K562 (cell line): ENCODE measurements at regions of chr2 and their contacts with region 1.

Region 1: DNA sequence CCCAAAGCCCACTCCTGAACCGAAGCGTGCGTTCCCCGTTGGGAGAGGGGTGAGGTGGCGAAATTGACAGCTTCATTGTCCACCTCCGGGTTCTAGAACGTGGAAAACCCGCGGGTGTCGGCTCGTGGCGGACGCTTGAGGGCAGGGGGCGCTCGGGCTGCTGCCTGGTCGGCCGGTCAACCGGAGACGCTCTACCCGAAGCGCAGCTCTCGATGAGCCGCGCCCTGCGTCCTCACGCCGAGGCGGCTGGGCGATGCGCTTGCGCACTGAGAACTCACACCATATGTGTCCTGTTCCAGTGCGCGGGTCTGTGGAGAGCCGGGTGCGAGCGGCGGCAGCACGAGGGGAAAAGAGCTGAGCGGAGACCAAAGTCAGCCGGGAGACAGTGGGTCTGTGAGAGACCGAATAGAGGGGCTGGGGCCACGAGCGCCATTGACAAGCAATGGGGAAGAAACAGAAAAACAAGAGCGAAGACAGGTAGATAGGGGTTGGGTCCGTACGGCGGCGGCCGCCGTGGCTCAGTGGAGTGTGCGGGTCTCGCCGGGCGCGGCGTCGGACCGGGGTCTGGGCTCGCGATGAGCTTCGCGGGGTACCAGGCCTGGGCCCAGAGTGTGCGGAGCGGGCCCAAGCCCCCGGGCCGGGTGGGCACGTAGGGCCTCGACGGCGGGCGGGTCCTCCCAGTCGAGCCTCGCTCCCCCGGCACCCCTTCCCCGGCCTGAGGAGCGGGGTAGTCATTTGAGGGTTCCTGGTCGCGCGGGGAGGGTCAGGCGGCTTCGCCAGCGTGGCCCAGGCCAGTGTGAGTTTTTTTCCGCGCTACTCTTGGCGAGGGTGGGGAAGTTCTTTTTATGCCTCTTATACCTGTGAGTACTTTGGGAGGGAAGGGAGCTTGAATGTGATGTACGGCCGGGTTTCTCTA is at the start of gene EIF5B:
- DNase-seq: peak; percentile 86 to 99 (median 90)
- ATAC-seq: peak; percentile 89
- H3K4me3 ChIP-seq: peak within 1 kb of the TSS; percentile 61
- H3K27ac ChIP-seq: peak within 1 kb of the TSS; percentile 92
- H3K4me1 ChIP-seq: peaks cover 11 to 19% of the 10 kb centered on the region in 2 experiments; a peak in 4 of 5 replicates
- H3K27me3 ChIP-seq: no peaks in the 10 kb centered on the region
- CTCF ChIP-seq: peak; percentile 77 to 83 (median 80)
- EP300 ChIP-seq: peak; percentile 52; the same call in 1 of the 2 replicates
- POLR2A ChIP-seq: peak; percentile 96
- RAD21 ChIP-seq: peak; percentile 11 to 14; a peak in 1 of 4 replicates
- polyA plus RNA-seq, gene EIF5B: 26.5 to 33.2 TPM

Region 2: GRCh38 chr2:98036349-98037000 is 1300.9 kb before region 1 on chr2:
- CTCF ChIA-PET with region 1: no interaction called
- POLR2A ChIA-PET with region 1: no interaction called
- in situ Hi-C with region 1: no loop called
- intact Hi-C with region 1: no loop called
- DNase-seq: no peak
- ATAC-seq: no peak; the same call in 2 of the 3 replicates
- H3K4me3 ChIP-seq: no peak overlapping the region
- H3K27ac ChIP-seq: no peak overlapping the region
- H3K4me1 ChIP-seq: peaks cover 0 to 7% of the 10 kb centered on the region in 2 experiments; a peak in 3 of 5 replicates
- H3K27me3 ChIP-seq: peaks cover 0 to 14% of the 10 kb centered on the region in 2 experiments; a peak in 2 of 5 replicates
- CTCF ChIP-seq: no peak
- EP300 ChIP-seq: no peak
- POLR2A ChIP-seq: no peak
- RAD21 ChIP-seq: no peak

Region 3: GRCh38 chr2:99171377-99172140 is 165.8 kb before region 1 on chr2:
- CTCF ChIA-PET with region 1: no interaction called
- POLR2A ChIA-PET with region 1: no interaction called
- in situ Hi-C with region 1: no loop called
- intact Hi-C with region 1: no loop called
- DNase-seq: no peak
- ATAC-seq: no peak
- H3K4me3 ChIP-seq: no peak overlapping the region
- H3K27ac ChIP-seq: no peak overlapping the region
- H3K4me1 ChIP-seq: no peaks in the 10 kb centered on the region
- H3K27me3 ChIP-seq: no peaks in the 10 kb centered on the region
- CTCF ChIP-seq: no peak
- EP300 ChIP-seq: no peak
- POLR2A ChIP-seq: no peak
- RAD21 ChIP-seq: no peak

Region 4: DNA sequence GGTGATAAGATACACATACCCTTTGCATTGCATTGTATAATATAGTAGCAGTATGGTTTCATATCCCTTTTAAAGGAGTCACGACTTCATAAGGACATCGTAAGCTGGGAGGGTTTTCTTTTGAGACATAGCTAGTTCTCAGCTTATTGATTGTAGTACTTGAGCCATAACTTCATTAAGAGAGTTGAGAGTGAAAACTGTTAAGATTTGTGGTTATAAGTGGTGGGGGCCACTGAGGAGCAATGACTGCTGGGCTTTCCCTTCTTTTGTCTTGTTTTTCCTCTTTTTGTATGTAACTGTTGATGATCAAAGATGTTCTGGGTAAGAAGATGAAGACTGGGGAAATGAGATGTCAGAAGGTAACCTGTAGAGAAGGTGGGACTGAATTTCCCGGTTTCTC is 10.8 kb after region 1 on chr2:
- CTCF ChIA-PET with region 1: no interaction called
- POLR2A ChIA-PET with region 1: interaction called, 10 read pairs
- in situ Hi-C with region 1: no loop called
- intact Hi-C with region 1: no loop called
- DNase-seq: no peak
- ATAC-seq: no peak; the same call in 2 of the 3 replicates
- H3K4me3 ChIP-seq: no peak overlapping the region
- H3K27ac ChIP-seq: no peak overlapping the region
- H3K4me1 ChIP-seq: peaks cover 2 to 3% of the 10 kb centered on the region in 2 experiments; a peak in 1 of 5 replicates
- H3K27me3 ChIP-seq: no peaks in the 10 kb centered on the region
- CTCF ChIP-seq: no peak
- EP300 ChIP-seq: no peak
- POLR2A ChIP-seq: no peak
- RAD21 ChIP-seq: no peak

Region 5: GRCh38 chr2:99404795-99405669 is 67.7 kb after region 1 on chr2:
- CTCF ChIA-PET with region 1: no interaction called
- POLR2A ChIA-PET with region 1: no interaction called
- in situ Hi-C with region 1: no loop called
- intact Hi-C with region 1: no loop called
- DNase-seq: no peak
- ATAC-seq: peak; percentile 12
- H3K4me3 ChIP-seq: no peak overlapping the region
- H3K27ac ChIP-seq: no peak overlapping the region
- H3K4me1 ChIP-seq: no peaks in the 10 kb centered on the region
- H3K27me3 ChIP-seq: no peaks in the 10 kb centered on the region
- CTCF ChIP-seq: no peak
- EP300 ChIP-seq: no peak
- POLR2A ChIP-seq: peak; percentile 55; the same call in 1 of the 2 replicates
- RAD21 ChIP-seq: no peak